A549 (cell line): ENCODE measurements at regions of chr4 and their contacts with region 1.

Region 1: DNA sequence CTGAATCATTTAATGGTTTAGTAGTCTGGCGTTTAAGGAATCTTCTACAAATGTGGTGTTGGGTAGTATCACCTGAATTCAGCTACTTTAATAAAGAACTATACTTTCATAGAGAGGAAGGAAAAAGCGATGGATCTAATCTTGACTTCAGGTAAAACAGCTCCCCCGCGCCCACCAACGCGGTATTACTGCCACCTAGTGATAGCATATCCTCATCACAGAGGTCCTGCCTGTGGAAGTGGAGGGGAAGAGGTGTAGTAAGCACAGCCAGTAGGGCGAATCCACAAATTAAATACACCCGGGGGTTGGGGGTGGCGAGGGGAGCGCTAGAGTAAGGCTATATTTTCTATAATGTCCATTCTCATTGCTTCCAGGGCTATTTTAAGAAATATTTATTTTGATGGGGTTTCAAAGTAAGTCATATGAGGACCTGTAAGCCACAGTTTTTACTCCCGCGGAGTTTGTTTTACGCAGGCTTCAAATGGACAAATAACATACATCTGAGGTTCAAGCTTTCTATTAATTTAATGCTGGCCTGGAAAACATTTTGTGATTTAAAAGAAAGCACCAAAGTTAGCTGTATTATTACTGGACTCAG is 8.3 kb upstream of the DAPP1 start:
- DNase-seq: peak; percentile 46 to 59
- ATAC-seq: peak; percentile 87 to 94
- H3K4me3 ChIP-seq: no peak overlapping the region
- H3K27ac ChIP-seq: no peak overlapping the region
- H3K4me1 ChIP-seq: no peaks in the 10 kb centered on the region
- CTCF ChIP-seq: peak; percentile 61
- EP300 ChIP-seq: no peak
- POLR2A ChIP-seq: no peak
- RAD21 ChIP-seq: peak; percentile 83

Region 2: GRCh38 chr4:99563310-99564186 is 244.8 kb before region 1 on chr4 and contains the start of gene TRMT10A:
- CTCF ChIA-PET with region 1: interaction called, 33 read pairs
- POLR2A ChIA-PET with region 1: interaction called, 5 read pairs
- DNase-seq: peak; percentile 70 to 96
- ATAC-seq: peak; percentile 98 to 99
- H3K4me3 ChIP-seq: peak within 1 kb of the TSS; percentile 76
- H3K27ac ChIP-seq: peak within 1 kb of the TSS; percentile 92 to 95
- H3K4me1 ChIP-seq: 0 out of 3 replicates have a peak, but pooled peaks cover 4% of the 10 kb centered on the region
- CTCF ChIP-seq: no peak
- EP300 ChIP-seq: no peak
- POLR2A ChIP-seq: peak; percentile 22; the same call in 1 of the 2 replicates
- RAD21 ChIP-seq: no peak
- polyA plus RNA-seq, gene TRMT10A: 7.2 and 10.6 TPM in 2 replicates

Region 3: DNA sequence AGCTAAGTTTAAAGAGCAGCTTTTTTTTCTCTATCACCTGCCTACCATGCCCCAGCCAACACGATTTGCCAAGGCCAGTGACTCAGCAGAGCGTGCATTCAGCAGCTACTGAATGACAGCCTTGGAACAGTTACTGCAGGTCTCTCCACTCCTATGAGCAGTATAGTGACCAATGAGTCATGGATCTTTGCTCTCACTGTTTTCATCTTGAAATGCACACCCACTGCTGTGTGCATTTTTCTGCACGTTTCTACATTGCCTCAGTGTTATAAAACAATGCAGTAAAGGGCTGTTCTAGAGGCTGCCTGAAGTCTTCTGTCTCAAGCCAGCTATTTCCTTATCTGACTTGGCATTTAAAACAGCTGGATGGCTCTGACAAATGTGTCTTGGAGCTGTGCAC is 84.7 kb before region 1 on chr4:
- CTCF ChIA-PET with region 1: interaction called, 10 read pairs
- POLR2A ChIA-PET with region 1: no interaction called
- DNase-seq: peak; percentile 38 to 68
- ATAC-seq: peak; percentile 96 to 99
- H3K4me3 ChIP-seq: no peak overlapping the region
- H3K27ac ChIP-seq: peak overlapping the region; percentile 67 to 84
- H3K4me1 ChIP-seq: peaks cover 26% of the 10 kb centered on the region
- CTCF ChIP-seq: no peak
- EP300 ChIP-seq: no peak
- POLR2A ChIP-seq: no peak
- RAD21 ChIP-seq: no peak

Region 4: DNA sequence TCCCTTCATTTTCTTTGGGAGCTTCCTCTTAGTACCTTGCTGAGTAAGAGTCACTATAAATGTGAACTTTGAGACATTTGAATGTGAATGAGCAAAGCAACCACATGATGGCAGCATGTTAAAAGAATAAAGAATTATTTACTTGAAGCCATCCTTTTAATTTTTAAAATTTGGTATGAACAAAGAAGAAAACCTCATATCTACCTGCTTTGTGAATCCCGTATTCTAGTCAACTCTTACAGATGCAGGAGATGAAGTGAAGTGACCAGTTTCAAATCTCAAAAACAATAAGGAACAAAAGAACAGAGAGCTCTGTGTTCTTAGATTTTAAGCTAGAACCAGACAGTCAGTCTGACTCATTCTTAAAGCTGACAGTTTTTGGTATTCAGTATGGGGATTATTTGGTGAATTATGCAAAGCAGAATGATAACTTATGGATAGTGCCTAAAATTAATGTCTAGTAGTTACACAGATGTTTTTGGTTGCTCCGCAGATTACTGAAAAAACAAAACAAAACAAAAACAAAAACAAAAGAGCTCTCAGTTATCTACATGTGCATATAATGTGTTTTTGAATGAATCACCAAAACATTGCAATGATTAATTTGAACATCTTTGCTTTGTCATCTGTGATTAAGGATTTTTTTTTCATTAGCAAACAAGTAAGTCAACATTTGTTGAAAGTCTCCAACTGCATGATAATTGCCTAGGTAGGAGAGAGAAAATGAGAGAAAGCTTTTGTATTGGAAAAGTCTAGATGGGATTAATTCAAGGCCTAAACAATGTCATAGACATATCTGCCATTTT is 189.9 kb after region 1 on chr4:
- CTCF ChIA-PET with region 1: no interaction called
- POLR2A ChIA-PET with region 1: no interaction called
- DNase-seq: peak; percentile 13 to 34
- ATAC-seq: peak; percentile 50 to 54; a peak in 3 of 6 replicates
- H3K4me3 ChIP-seq: no peak overlapping the region
- H3K27ac ChIP-seq: no peak overlapping the region; a peak in 1 of 6 replicates
- H3K4me1 ChIP-seq: peaks cover 3% of the 10 kb centered on the region; the same call in 1 of the 3 replicates
- CTCF ChIP-seq: peak; percentile 52; the same call in 2 of the 3 replicates
- EP300 ChIP-seq: no peak
- POLR2A ChIP-seq: no peak
- RAD21 ChIP-seq: peak; percentile 41 to 63; a peak in 3 of 5 replicates